GM10248 (cell line): ENCODE measurements at regions of chr4 and their contacts with region 1.

Region 1: DNA sequence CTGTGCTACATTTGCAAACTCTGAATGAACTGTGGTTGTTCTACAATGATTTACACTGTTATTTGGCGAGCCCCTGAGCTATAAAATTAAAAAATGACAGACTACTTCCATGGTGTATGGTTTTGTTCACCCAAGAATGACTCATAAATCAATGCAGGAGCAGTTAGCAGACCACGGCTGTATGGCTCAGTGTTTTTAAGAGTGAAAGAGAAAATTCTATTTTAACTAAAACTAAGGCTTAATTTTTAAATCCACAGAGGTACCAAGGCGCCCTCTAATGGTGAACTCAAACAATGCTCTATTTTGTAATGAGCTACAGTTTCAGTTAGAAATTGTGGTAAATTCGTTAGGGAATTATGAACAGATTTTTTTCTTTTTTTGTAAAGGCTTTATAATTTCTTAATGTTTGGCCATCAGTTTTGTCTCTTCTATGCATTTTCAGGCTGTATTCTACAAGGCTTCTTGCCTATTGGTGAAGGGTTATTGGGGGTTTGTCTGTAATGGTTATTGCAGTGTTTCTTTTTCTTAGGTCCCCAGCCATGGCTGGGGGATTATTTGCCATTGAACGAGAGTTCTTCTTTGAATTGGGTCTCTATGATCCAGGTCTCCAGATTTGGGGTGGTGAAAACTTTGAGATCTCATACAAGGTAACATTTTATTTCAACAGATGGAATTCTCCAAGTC is 32.5 kb downstream of the HMGB2 start:
- DNase-seq: peak; percentile 36
- CTCF ChIP-seq: peak; percentile 58

Region 2: DNA sequence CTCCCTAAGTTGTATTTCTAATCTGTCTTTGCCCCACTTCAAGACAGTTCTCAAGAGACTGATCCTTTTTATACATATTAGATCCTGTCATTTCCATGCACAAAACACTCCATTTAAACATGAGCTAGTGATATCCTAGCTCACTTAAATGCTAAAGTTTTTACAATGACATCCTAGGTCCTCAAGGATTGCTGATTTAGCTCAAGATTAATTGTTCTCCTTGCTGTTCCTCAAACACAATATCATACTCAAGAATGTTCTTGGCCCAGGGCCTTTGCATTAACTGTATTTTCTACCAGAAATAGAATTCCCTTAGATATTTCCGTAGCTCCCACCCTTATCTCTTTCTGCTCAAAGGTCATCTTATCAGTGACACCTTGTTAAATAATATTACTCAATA is 1218.4 kb before region 1 on chr4:
- CTCF ChIA-PET with region 1: no interaction called
- POLR2A ChIA-PET with region 1: no interaction called
- DNase-seq: no peak
- CTCF ChIP-seq: no peak

Region 3: DNA sequence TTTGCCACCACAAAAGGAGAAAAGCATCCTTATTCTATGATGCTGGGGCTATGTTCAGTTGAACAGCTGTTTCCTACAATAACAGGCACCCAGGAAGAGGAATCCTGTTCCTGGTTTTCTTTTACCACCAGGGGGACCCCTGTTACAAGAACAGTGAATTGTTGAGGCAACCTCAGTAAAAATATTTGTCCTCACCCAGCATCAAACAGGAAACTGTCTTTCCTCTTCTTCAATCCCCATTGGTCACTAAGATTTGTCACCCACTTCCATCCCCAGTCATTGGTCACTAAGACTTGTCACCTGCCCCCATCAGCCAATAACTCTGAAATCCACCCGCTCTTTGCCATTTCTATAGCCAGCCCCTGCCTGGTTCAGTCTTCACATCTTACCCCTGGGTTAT is 276.5 kb before region 1 on chr4:
- CTCF ChIA-PET with region 1: interaction called, 41 read pairs
- POLR2A ChIA-PET with region 1: no interaction called
- DNase-seq: peak; percentile 54
- CTCF ChIP-seq: peak; percentile 53

Region 4: DNA sequence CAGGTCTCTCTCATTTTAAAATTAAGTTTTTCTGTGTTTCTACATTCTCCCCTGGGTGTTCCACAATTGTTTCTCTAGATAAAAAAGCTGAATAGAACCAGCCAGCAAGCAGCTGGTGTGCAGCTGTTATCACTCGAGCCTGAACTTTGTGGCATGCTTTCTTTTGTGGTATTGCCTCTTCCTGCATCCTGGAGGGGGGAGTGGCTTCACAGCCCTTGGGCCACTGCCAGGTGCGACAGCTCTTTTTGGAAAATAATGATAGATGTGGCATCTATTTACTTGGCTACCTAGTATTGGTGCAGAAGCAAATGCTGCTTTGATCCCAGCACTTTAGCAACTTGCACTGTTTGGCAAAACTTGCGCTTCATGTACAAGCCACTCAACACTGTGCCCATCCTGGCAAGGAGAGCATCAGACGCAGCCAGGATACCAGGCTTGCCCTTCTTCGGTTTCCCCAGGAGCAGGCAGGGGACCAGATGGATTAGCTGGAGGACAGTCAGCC is 36.9 kb before region 1 on chr4:
- CTCF ChIA-PET with region 1: interaction called, 54 read pairs
- POLR2A ChIA-PET with region 1: no interaction called
- DNase-seq: peak; percentile 17
- CTCF ChIP-seq: no peak

Region 5: GRCh38 chr4:173288296-173288695 is 13.4 kb before region 1 on chr4:
- CTCF ChIA-PET with region 1: interaction called, 86 read pairs
- POLR2A ChIA-PET with region 1: no interaction called
- DNase-seq: peak; percentile 38
- CTCF ChIP-seq: peak; percentile 50

Region 6: DNA sequence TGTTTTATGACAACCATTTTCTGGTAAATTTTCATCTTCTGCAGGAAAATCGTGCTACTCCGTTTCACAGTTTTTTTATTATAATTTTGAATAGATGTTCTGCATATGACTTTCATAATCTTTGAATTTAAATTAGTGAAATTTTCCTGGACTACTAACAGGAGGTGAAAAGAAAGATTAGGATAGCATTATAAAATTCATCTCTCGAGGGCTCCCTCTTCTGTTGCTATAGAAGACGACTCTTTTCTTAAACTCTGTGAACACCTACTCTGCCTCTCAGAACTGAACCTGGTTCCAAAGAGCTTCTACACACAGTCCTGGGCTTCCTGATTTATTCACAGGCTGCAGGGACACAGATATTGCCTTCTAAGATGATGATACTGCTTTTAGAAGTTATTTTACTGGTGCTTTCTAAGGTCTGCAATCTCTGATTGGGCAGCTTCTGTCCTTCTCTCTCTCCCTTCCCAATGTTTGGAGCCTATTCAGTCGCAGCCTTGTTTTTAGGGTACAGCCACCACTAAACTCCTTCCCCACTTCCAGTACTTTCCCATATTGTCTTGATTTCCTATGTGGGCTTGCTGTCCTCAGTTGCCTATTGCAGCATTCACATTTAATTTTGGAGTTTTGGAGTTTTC is 59.0 kb after region 1 on chr4:
- CTCF ChIA-PET with region 1: interaction called, 11 read pairs
- POLR2A ChIA-PET with region 1: no interaction called
- DNase-seq: no peak
- CTCF ChIP-seq: no peak

Region 7: DNA sequence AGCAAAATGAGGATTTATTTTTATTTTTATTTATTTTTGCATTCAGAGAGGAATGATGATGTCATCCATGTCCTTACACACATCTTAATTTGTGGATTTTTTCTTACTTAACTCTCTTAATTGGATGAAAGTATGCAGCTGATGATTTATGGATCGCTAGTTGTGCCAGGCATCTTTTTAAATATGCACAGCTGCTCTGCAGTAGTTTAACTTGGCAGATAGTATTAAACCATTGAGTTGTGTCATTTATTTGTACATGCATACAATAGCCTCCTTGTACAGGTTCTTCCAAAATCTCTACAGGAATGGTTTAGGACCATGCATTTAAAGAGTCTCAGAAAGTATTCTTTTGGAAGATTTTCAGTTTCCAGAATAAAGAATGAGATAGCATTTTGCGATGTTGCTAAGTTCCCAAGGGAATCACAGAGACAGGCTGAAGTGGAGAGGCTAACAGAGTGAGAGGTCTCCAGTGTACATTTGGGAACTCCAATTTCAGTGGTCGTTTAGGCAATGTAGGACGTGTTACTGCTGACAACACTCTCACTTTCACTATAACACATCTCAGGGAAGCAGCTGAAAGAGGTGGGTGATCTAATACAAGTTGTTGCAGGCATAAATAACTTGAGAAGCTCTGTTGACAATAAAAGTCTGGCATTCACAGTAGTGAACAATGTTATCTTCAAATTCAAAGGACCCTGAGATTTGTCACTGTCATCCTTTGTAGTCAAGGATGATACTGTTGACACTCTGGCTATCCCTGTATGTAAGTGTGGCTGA is 147.1 kb after region 1 on chr4:
- CTCF ChIA-PET with region 1: interaction called, 10 read pairs
- POLR2A ChIA-PET with region 1: no interaction called
- DNase-seq: peak; percentile 24
- CTCF ChIP-seq: no peak